ENCODE measurements at regions of chr20 and their contacts with region 1.

Region 1: DNA sequence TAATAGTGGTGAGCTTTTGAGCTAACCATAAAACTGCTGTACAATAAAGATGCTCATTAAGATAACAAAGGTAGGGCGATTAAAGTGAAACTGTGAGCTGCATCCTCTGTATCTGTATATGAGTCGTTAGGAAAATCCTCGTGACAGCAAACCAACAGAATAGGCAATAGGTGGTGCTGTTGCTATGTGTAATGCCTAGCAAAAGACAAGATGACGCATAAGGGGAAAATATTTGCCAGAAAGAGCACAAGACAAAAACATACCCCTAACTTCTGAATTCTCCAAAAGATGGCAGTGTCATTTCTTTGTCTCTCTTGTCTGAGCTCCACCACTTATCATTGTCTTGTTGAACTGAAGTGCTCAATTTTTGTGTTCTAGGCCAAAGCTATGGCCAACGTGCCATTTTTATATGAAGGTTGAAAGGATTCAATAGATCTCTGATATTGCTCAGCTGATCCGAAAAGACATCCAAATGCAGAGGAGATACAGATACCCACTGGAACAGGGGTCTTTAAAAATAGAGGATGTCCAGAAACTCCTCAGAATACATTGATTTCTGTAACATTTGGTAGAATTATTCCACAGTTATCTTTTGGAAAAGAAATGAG is 56.3 kb upstream of the ANKEF1 start:
- DNase-seq: no peak
- ATAC-seq: peak; percentile 77

Region 2: GRCh38 chr20:9912858-9913434 is 65.6 kb before region 1 on chr20:
- intact Hi-C with region 1: no loop called
- DNase-seq: peak in 1 of 2 donors; percentile 48
- ATAC-seq: no peak

Region 3: DNA sequence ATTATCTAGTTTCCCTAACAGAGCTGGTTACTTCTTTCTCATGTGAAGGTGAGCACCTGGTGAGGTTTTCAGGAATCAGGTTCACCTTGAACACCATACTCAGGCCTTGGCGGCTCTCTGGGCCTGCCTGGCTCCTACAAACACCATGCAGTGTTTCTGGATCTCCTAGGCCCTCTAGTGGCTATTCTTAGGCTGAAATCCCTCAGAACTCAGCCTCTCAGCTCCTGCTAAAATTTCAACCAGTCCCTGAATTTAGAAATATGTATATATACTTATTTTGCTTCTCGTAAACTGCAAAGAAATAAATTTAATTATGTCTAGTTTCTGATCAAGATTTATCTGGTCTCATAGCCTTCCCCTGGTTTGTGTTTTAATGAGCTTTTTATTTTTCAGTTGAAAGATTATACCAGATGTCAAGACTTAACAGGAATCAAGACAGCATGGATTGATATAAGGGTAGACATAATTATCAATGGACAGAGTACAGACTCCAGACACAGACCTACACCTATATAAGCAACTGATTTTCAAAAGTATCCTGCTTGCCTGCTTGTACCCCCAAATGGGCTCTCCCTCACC is 112.2 kb after region 1 on chr20:
- intact Hi-C with region 1: loop called (anchors 5 to 10 kb)
- DNase-seq: peak in 1 of 2 donors; percentile 34
- ATAC-seq: peak; percentile 91

Region 4: GRCh38 chr20:10297684-10298240 is 319.3 kb after region 1 on chr20:
- intact Hi-C with region 1: no loop called
- DNase-seq: no peak
- ATAC-seq: no peak

Region 5: GRCh38 chr20:10427060-10427692 is 448.7 kb after region 1 on chr20:
- intact Hi-C with region 1: loop called in 1 of 2 experiments (anchors 5 kb)
- DNase-seq: peak in 1 of 2 donors; percentile 71
- ATAC-seq: no peak

Measured in left colon (tissue), 2 donors.